Head of caudate nucleus (tissue), 42 donors: ENCODE measurements at regions of chr17 and their contacts with region 1.

Region 1: DNA sequence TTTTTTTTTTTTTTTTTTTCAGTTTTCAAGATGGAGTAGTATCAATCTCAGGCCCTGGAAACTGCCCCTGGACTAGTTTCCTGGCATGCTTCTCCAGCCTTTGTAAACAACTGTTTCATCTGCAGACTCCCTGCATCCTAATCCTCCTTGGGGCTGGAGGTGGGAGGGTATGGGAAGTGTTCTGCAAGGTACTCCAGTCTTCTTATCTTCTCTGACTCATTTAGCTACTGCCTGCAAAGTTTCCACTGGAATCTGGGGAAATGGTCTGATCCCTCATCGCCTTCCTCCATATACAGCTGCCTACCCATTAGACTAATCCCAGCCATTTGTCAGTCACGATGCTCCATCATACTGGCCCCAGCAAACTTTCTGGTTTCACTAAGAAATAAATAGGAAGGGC is 21.5 kb downstream of the COPZ2 start:
- DNase-seq: peak in 1 of 42 donors; percentile 43

Region 2: DNA sequence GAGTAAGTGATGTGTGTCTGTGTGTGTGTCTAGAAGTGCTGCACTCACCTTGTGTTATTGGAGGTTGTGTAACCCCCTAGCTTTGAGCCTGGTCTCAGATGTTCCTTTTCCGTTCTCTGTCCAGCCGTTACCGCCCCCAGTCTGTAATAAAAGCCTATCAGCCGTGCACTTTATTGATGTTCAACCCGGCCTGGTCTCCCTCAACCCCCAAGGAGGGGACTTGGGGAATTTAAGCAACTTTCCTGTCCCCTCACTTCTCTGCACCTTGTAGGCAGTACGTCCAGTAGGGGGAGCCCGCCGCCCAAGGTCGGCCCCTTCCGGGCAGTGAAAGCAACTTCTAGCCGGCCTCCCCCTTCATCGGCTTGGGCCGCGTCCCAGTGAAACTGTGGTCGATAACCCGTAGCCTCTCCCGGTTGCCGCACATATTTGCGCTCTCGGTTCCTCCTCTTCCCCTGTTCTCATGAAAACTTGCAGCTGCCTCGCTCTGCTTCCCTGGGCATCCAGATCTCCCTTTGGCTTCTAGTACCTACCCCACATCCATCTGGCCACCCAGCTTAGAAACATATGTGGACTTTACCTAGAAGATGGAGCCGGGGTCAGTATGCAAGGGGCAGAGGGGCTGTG is 66.9 kb before region 1 on chr17:
- intact Hi-C with region 1: loop called (anchors 2 kb)
- DNase-seq: peak; percentile 75 to 95 (median 88)

Region 3: DNA sequence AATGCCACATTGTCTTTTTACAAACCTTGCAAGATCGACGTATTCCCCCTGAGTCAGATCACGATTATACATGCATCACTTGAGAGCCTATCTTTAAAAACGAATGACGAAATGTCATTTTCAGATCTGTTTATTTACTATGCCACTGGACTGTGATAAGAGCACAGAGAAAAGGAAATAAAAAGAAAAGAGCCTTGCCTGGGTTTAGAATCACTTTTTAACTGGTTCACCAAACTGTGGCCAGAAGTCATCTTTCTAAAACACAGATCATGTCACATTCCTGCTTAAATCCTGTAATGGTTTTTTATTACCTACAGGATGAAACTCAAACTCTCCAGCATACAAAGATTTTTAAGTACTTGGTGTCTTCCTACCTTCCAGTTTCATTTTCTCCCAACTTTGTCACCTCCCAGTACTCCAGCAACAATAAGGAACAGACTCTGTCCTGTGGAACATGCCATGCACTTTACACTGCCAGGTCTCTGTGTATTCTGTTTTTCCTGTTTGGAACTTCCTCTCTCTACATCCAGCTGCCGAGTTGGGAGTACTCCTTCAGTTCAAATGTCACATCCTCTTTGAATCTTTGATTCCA is 182.9 kb after region 1 on chr17:
- intact Hi-C with region 1: no loop called
- DNase-seq: no peak